ENCODE measurements at regions of chr20 and their contacts with region 1.

Region 1: DNA sequence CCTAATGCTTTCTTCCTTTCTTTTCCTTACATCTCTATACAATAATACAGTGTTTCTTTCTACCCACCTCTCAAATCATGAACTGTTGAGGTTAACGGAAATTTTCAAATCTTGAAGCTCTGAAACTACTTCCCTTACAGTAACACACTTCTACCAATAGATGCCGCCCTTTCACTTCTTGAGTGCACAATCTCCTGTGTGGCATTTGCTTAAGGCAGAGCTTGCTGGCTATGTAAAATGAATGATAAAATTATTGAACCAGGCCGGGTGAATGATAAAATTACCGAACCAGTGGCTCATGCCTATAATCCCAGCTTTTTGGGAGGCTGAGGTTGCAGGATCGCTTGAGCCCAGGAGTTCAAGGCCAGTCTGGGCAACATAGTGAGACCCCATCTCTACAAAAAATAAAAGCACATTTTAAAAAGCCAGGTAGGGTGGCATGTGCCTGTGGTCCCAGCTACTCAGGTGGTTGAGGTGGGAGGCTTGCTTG is 56.8 kb downstream of the KCNS1 start:
- DNase-seq: peak; percentile 36
- H3K4me3 ChIP-seq: no peak overlapping the region
- CTCF ChIP-seq: peak; percentile 77

Region 2: DNA sequence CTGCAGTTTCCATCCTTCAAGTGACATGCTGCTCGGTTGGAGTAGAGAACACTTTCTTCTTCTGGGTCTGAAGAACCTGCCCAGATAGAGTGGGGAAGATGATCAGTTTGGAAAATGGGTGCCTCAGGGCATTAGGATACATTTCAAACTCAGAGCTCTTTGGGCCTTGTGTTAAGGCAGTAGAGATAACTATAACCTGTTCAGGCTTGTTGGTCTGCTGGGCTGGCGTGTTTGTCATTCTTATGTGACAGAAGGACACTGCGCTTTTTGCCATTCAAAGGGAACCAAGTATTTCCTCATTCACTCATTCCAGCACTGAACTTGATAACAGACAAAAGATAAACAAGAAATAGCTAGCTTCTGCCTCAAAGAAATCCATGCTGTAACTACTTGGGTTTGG is 87.7 kb before region 1 on chr20:
- CTCF ChIA-PET with region 1: no interaction called
- POLR2A ChIA-PET with region 1: no interaction called
- DNase-seq: no peak
- H3K4me3 ChIP-seq: no peak overlapping the region
- CTCF ChIP-seq: no peak

Region 3: GRCh38 chr20:45020236-45020886 is 23.8 kb before region 1 on chr20:
- CTCF ChIA-PET with region 1: interaction called, 79 read pairs
- POLR2A ChIA-PET with region 1: no interaction called
- DNase-seq: no peak
- H3K4me3 ChIP-seq: no peak overlapping the region
- CTCF ChIP-seq: no peak

Region 4: DNA sequence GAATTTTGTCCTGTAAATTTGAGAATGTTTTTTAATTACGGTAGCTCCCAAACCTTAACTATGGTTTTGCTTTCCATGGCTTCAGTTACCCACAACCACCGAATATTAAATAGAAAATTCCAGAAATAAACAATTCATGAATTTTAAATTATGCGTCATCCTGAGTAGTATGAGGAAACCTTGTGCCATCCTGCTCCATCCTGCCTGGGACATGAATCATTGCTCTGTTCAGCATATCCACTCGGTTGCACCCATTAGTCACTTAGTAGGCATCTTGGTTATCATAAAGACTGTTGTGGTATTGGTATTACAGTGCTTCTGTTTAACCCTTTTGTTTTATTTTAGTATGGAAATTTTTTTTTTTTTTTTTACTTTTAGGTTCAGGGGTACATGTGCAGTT is 17.1 kb after region 1 on chr20:
- CTCF ChIA-PET with region 1: interaction called, 146 read pairs
- POLR2A ChIA-PET with region 1: no interaction called
- DNase-seq: peak; percentile 61
- H3K4me3 ChIP-seq: no peak overlapping the region
- CTCF ChIP-seq: no peak

Region 5: DNA sequence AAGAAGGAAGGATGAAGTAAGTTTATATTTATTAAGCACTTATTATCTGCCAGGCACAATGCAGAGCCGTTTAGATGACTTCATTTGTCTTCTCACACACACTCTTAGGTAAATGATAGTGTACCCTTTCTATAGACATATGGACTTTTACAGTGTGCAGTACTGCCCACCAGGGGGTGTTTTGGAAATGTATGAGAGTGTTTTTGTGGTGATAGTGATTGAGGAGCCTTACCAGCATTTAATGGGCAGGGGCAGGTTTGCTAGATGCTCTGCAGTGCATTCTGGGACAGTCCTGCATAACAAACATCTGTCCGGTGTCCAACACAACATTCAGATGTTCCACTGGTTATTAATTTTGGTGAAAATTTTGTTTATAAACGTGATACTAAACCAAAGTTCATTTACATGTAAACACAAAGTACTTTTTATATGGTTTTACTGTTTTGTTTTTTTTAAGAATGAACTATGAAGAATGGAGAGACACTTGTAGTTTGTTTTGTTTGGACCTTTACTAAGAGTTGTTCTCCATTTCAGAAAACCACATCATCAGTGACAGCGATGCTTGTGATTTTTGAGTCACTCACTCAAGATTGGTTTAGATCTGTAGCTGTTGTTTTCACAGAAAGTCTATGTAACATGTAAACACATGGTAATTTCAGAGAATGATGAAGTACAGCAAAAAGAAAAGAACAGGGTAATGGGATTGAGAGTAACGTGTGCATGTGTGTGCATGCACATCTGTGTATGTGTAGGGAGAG is 36.9 kb after region 1 on chr20:
- CTCF ChIA-PET with region 1: interaction called, 17 read pairs
- POLR2A ChIA-PET with region 1: no interaction called
- DNase-seq: no peak
- H3K4me3 ChIP-seq: no peak overlapping the region
- CTCF ChIP-seq: peak; percentile 44

Region 6: GRCh38 chr20:45111799-45112471 is 67.8 kb after region 1 on chr20:
- CTCF ChIA-PET with region 1: interaction called, 141 read pairs
- POLR2A ChIA-PET with region 1: no interaction called
- DNase-seq: no peak
- H3K4me3 ChIP-seq: no peak overlapping the region
- CTCF ChIP-seq: peak; percentile 27

Region 7: GRCh38 chr20:45311589-45312211 is 267.6 kb after region 1 on chr20:
- CTCF ChIA-PET with region 1: interaction called, 26 read pairs
- POLR2A ChIA-PET with region 1: no interaction called
- DNase-seq: no peak
- H3K4me3 ChIP-seq: no peak overlapping the region
- CTCF ChIP-seq: peak; percentile 94

Region 8: DNA sequence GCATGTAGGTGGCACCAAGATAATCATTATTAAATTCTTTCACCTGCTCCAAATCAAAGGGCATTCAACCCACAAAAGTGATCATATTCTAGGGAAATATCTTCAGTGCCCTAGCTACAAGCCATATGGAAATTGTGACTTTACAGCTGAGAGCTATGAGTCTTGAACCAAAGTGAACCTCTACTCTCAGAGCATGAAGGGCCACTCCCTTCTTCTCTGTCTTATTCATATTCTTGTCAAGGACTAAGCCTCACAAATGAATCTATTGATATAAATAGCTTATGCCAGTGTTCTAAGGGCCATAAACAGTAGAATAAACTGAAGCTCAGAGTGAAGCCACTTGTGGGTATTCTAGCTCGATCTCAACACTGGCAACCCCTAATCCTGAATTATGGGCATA is 707.6 kb after region 1 on chr20:
- CTCF ChIA-PET with region 1: no interaction called
- POLR2A ChIA-PET with region 1: no interaction called
- DNase-seq: no peak
- H3K4me3 ChIP-seq: no peak overlapping the region
- CTCF ChIP-seq: no peak

Measured in AG04449 (cell line).